ENCODE measurements at regions of chr1 and their contacts with region 1.

Region 1: GRCh38 chr1:179081687-179082332 is at the start of gene TOR3A:
- DNase-seq: peak; percentile 66 to 82
- ATAC-seq: peak; percentile 65 to 84 (median 84)
- H3K4me3 ChIP-seq: peak within 1 kb of the TSS; percentile 84
- H3K4me3 Mint-ChIP-seq: peak within 1 kb of the TSS; percentile 93
- H3K27ac ChIP-seq: peak within 1 kb of the TSS; percentile 86
- H3K27ac Mint-ChIP-seq: peak within 1 kb of the TSS; percentile 91 to 92
- H3K4me1 ChIP-seq: peaks cover 20% of the 10 kb centered on the region
- H3K4me1 Mint-ChIP-seq: peaks cover 12 to 24% of the 10 kb centered on the region in 2 donors
- H3K27me3 ChIP-seq: no peaks in the 10 kb centered on the region
- H3K27me3 Mint-ChIP-seq: no peaks in the 10 kb centered on the region
- CTCF ChIP-seq: no peak
- total RNA-seq, gene TOR3A: 22.7 to 33.3 (median 29.0) TPM

Region 2: DNA sequence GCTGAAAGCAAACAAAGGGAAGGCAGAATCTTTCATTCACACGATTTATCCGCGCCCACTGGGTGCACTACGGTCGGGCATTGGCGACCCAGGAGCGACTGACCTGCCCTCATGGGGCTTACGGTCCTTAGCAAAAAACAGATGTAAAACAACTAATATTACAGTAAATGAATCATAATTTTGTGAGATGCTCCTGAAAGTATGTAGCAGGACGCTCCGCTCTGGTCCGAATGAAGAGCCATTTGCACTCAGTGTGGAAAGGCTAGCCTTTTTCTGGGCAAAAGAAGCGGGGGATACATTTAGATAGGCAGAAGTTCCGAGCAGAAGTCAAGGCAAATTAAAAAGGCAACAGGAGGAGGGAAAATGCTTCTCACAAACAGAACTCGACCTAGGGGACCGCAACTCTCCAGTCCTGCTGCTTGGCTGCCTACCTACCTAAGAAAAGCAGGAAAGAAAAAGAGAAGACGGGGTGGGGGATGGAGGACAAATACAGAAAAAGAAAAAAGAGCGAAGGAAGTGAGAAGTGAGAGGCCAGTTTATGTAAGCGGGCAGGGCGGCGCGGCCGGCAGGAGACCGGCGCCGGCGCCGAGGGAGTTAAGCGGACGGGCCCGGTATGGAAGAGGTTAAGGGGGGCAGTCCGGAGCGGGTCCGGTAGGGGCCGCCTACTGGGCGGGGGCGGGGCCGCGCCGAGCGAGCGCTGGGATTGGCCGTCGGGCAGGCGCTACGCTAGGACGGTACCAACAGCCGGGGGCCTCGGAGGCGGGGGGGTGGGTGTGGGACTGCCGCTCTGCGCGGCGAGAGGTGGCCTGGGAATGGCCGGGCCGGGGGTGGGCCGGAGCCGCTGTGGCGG is 56.5 kb before region 1 on chr1 and contains the start of gene FAM20B:
- intact Hi-C with region 1: loop called (anchors 1 kb)
- DNase-seq: peak; percentile 90 to 92
- ATAC-seq: peak; percentile 86 to 96 (median 89)
- H3K4me3 ChIP-seq: peak within 1 kb of the TSS; percentile 67
- H3K4me3 Mint-ChIP-seq: peak within 1 kb of the TSS; percentile 93
- H3K27ac ChIP-seq: peak within 1 kb of the TSS; percentile 95
- H3K27ac Mint-ChIP-seq: peak within 1 kb of the TSS; percentile 84 to 95
- H3K4me1 ChIP-seq: peaks cover 9% of the 10 kb centered on the region
- H3K4me1 Mint-ChIP-seq: peaks cover 43 to 44% of the 10 kb centered on the region in 2 donors
- H3K27me3 ChIP-seq: no peaks in the 10 kb centered on the region
- H3K27me3 Mint-ChIP-seq: peaks cover 5 to 12% of the 10 kb centered on the region in 2 donors
- CTCF ChIP-seq: no peak
- total RNA-seq, gene FAM20B: 27.6 to 35.2 (median 29.0) TPM

Region 3: DNA sequence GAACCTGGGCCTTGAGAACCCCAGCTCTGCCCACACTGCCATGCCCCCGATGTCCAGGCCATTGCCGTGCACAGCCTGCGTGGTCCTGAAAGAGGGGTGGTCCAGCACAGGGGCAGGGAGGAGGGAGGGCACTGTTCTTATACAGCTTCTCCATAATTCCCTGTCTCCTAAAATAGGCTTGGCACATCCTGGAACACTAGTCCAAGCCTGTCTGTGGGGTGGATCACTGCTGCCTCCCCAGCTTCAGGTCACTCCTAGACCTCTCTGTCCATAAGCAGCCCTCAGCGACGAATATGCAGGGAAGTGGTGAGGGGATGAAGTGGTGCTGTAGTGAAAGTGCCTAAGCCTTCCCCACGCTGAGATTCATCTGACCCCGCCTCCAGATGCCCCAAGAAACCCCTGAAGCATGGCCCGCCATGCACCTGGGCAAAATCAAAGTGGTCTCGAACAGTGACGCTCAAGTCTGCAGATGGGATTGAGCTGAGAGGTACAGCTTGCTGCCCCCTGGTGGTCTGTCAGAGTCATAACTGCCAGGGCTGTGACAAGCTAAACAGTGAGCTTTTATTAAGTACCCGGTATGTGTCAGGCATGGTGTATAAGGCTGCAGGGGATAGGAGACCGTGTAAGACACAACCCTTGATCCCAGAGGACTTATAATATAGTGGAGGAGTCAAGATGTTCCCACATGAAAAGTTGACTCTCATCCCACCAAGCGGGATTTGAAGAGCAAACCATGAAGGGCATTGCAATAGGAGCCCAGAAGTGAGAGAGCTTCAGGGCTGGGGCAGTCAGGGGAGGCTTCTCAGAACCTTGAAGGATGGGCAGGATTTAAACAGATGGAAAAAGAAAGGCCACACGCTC is 727.9 kb after region 1 on chr1:
- intact Hi-C with region 1: loop called (anchors 2 kb)
- DNase-seq: peak; percentile 49 to 90
- ATAC-seq: peak; percentile 70 to 75 (median 73)
- H3K4me3 ChIP-seq: no peak overlapping the region
- H3K4me3 Mint-ChIP-seq: no peak overlapping the region
- H3K27ac ChIP-seq: no peak overlapping the region
- H3K27ac Mint-ChIP-seq: no peak overlapping the region
- H3K4me1 ChIP-seq: peaks cover 13% of the 10 kb centered on the region
- H3K4me1 Mint-ChIP-seq: peaks cover 5 to 11% of the 10 kb centered on the region in 2 donors
- H3K27me3 ChIP-seq: no peaks in the 10 kb centered on the region
- H3K27me3 Mint-ChIP-seq: peaks cover 11 to 13% of the 10 kb centered on the region in 2 donors
- CTCF ChIP-seq: peak; percentile 95

Measured in natural killer cell (primary cell).